ENCODE measurements at regions of chr19 and their contacts with region 1.

Region 1: GRCh38 chr19:16330368-16330801 is 5.8 kb downstream of the KLF2 start:
- DNase-seq: peak; percentile 75
- ATAC-seq: peak; percentile 78
- H3K4me3 Mint-ChIP-seq: peak overlapping the region; percentile 59
- H3K27ac Mint-ChIP-seq: peak overlapping the region; percentile 78
- H3K4me1 Mint-ChIP-seq: peaks cover 43% of the 10 kb centered on the region
- H3K27me3 Mint-ChIP-seq: peaks cover 31% of the 10 kb centered on the region

Region 2: GRCh38 chr19:16247353-16248182 is 82.8 kb before region 1 on chr19:
- POLR2A ChIA-PET with region 1: interaction called, 21 read pairs
- DNase-seq: peak; percentile 91
- ATAC-seq: peak; percentile 85
- H3K4me3 Mint-ChIP-seq: no peak overlapping the region
- H3K27ac Mint-ChIP-seq: peak overlapping the region; percentile 34
- H3K4me1 Mint-ChIP-seq: peaks cover 15% of the 10 kb centered on the region
- H3K27me3 Mint-ChIP-seq: peaks cover 7% of the 10 kb centered on the region

Region 3: GRCh38 chr19:16259385-16260159 is 70.8 kb before region 1 on chr19:
- POLR2A ChIA-PET with region 1: interaction called, 15 read pairs
- DNase-seq: no peak
- ATAC-seq: peak; percentile 23
- H3K4me3 Mint-ChIP-seq: no peak overlapping the region
- H3K27ac Mint-ChIP-seq: peak overlapping the region; percentile 38
- H3K4me1 Mint-ChIP-seq: peaks cover 42% of the 10 kb centered on the region
- H3K27me3 Mint-ChIP-seq: peaks cover 16% of the 10 kb centered on the region

Region 4: DNA sequence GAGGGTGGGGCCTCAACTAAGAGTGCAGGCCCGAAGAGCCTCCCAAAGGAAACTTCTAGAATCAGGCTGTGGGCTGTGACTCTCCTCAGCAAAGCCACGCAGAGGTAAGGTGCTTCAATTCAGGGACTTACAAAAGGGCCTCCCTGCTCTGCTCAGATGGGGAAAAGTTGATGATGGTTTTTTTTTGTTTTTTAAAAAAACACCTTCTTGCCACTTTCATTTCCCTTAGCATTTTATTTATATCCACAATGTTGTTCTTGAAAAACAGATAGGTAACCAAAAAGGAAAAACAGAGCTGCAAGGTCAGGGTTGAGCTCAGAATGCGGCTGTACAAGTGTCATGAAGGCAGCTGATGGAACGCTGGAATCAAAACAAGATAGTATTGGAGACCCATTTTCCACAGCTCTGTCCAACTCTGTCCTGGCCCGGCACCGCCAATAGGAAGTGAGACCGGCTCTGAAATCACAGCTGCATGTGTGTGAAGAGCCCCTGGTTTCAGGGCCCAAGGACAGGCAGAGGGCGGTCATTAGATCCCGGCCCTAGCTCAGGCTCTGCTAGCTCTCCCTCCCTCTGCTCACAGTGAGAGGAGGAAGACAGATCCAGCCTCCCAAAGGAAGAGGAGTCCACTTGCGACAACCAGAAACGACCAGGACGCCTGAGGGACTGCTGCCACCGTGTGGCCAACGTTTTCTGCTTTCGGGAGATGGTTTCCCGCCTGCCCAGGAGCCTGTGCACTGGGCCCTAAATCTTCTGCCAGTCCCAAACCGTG is 52.6 kb after region 1 on chr19:
- POLR2A ChIA-PET with region 1: interaction called, 532 read pairs
- DNase-seq: peak; percentile 82
- ATAC-seq: peak; percentile 53
- H3K4me3 Mint-ChIP-seq: peak overlapping the region; percentile 11
- H3K27ac Mint-ChIP-seq: peak overlapping the region; percentile 43
- H3K4me1 Mint-ChIP-seq: peaks cover 24% of the 10 kb centered on the region
- H3K27me3 Mint-ChIP-seq: no peaks in the 10 kb centered on the region

Measured in activated naive CD8-positive, alpha-beta T cell treated with anti-CD3 and anti-CD28 coated beads, Interleukin-2, amount 10 ng/mL, durations not matched to agents 7 days and 5 days (primary cell).